ENCODE measurements at regions of chr19 and their contacts with region 1.

Region 1: DNA sequence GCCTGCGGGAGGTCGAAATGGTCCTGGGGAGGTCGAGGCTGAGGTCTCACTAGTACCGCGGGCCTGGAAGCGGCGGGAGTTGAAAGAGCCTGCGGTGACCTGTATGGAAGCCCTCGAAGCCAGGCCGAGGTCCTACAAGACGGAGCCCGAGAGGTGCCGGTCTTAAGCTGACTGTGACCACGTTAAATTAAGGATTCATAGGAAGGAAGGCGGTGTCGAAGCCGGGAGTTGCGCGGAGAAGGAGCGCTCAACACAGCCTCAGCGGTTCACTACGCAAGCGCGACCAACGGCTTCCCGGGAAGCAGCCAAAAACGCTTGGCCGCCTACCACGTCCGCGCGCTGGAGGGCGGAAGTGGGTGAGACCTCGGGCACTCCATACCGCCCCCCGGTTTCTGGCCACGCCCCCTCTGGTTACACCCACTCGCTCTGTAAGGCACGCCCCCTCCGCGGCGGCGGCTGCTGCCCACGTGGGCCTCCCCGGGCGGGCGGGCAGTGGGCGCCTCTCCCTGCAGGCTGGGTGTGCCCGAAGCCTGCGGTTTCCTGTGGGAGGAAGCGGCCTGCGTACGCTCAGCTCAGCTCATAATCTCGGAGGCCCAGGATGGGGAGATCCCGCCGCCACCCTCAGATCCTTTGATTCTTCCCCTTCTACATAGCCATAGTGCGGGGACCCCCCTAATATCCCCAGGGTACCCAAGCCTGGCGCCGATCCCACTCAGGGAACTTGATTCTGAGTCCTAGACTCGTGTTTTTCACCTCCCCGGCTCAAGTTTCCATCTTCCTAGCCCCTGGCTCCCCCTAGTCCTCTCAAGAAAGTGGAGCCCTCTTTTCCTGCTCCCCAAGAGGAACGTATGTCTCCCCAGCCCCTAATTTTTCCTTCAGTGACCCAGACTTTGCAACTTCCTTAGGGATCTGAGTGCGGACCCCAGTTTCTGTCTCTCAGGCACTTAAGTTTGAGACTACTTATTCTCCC is 3.4 kb upstream of the EMP3 start:
- DNase-seq: peak; percentile 99 to 100 (median 100)
- ATAC-seq: peak; percentile 68
- H3K4me3 ChIP-seq: peak overlapping the region; percentile 76 to 78
- H3K4me3 Mint-ChIP-seq: peak overlapping the region; percentile 94
- H3K27ac ChIP-seq: peak overlapping the region; percentile 87 to 99
- H3K27ac Mint-ChIP-seq: peak overlapping the region; percentile 100
- H3K4me1 ChIP-seq: peaks cover 54% of the 10 kb centered on the region
- H3K4me1 Mint-ChIP-seq: peaks cover 60% of the 10 kb centered on the region
- H3K27me3 ChIP-seq: no peaks in the 10 kb centered on the region
- H3K27me3 Mint-ChIP-seq: no peaks in the 10 kb centered on the region
- CTCF ChIP-seq: no peak

Region 2: GRCh38 chr19:48203732-48204628 is 117.9 kb before region 1 on chr19:
- CTCF ChIA-PET with region 1: no interaction called
- POLR2A ChIA-PET with region 1: interaction called, 8 read pairs
- intact Hi-C with region 1: loop called in 1 of 2 experiments (anchors 5 kb)
- DNase-seq: peak; percentile 78 to 95 (median 90)
- ATAC-seq: peak; percentile 100
- H3K4me3 ChIP-seq: peak overlapping the region; percentile 81 to 83
- H3K4me3 Mint-ChIP-seq: no peak overlapping the region
- H3K27ac ChIP-seq: peak overlapping the region; percentile 61 to 72
- H3K27ac Mint-ChIP-seq: no peak overlapping the region
- H3K4me1 ChIP-seq: peaks cover 16% of the 10 kb centered on the region
- H3K4me1 Mint-ChIP-seq: peaks cover 26% of the 10 kb centered on the region
- H3K27me3 ChIP-seq: no peaks in the 10 kb centered on the region
- H3K27me3 Mint-ChIP-seq: no peaks in the 10 kb centered on the region
- CTCF ChIP-seq: no peak

Region 3: DNA sequence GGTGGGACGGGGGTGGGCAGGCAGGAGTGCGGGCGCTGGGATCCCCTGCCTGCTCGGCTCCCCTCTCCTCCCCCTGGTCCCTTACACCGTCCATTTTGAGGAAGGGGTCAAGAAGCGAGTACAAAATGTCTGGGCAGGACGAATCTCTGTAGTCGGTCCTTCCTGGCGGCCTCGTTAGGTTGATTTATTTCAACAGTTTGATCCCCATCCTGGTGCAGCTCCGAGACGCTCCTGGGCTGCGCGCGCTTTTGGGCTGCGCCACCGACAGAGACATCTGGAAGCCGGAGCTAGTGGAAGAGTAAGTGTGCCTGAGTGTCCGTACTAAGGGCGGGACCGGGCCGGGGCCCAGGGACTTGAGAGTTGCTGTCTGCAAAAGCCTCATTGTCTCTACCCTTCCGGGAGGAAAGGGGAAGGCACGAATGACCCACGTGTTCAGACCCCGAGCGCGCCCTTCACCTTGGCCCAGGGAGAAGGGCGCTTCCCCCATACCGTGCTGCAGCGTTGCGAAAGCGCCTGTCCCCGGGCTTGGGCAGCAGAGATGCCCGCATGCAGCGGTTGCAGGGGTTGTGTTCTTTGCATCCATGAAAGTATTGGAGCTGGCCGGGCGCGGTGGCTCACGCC is 50.3 kb before region 1 on chr19:
- CTCF ChIA-PET with region 1: interaction called, 3 read pairs
- POLR2A ChIA-PET with region 1: no interaction called
- intact Hi-C with region 1: loop called (anchors 1 to 2 kb)
- DNase-seq: peak in 3 of 9 experiments; percentile 10 to 55 (median 30)
- ATAC-seq: peak; percentile 23
- H3K4me3 ChIP-seq: peak overlapping the region; percentile 41 to 43
- H3K4me3 Mint-ChIP-seq: peak overlapping the region; percentile 82
- H3K27ac ChIP-seq: no peak overlapping the region
- H3K27ac Mint-ChIP-seq: no peak overlapping the region
- H3K4me1 ChIP-seq: peaks cover 4% of the 10 kb centered on the region
- H3K4me1 Mint-ChIP-seq: peaks cover 13% of the 10 kb centered on the region
- H3K27me3 ChIP-seq: peaks cover 0 to 14% of the 10 kb centered on the region in 2 experiments
- H3K27me3 Mint-ChIP-seq: peaks cover 12% of the 10 kb centered on the region
- CTCF ChIP-seq: no peak

Region 4: GRCh38 chr19:48391107-48391986 is 69.4 kb after region 1 on chr19 and contains the start of gene KDELR1:
- CTCF ChIA-PET with region 1: interaction called, 3 read pairs
- POLR2A ChIA-PET with region 1: no interaction called
- intact Hi-C with region 1: loop called (anchors 2 kb)
- DNase-seq: peak; percentile 53 to 86 (median 76)
- ATAC-seq: peak; percentile 85
- H3K4me3 ChIP-seq: peak within 1 kb of the TSS; percentile 75 to 81
- H3K4me3 Mint-ChIP-seq: peak within 1 kb of the TSS; percentile 92
- H3K27ac ChIP-seq: peak within 1 kb of the TSS; percentile 87 to 92
- H3K27ac Mint-ChIP-seq: peak within 1 kb of the TSS; percentile 95
- H3K4me1 ChIP-seq: peaks cover 37% of the 10 kb centered on the region
- H3K4me1 Mint-ChIP-seq: peaks cover 39% of the 10 kb centered on the region
- H3K27me3 ChIP-seq: peaks cover 24 to 31% of the 10 kb centered on the region in 2 experiments
- H3K27me3 Mint-ChIP-seq: peaks cover 15% of the 10 kb centered on the region
- CTCF ChIP-seq: peak; percentile 96
- total RNA-seq, gene KDELR1: 29.7 to 33.1 TPM

Region 5: DNA sequence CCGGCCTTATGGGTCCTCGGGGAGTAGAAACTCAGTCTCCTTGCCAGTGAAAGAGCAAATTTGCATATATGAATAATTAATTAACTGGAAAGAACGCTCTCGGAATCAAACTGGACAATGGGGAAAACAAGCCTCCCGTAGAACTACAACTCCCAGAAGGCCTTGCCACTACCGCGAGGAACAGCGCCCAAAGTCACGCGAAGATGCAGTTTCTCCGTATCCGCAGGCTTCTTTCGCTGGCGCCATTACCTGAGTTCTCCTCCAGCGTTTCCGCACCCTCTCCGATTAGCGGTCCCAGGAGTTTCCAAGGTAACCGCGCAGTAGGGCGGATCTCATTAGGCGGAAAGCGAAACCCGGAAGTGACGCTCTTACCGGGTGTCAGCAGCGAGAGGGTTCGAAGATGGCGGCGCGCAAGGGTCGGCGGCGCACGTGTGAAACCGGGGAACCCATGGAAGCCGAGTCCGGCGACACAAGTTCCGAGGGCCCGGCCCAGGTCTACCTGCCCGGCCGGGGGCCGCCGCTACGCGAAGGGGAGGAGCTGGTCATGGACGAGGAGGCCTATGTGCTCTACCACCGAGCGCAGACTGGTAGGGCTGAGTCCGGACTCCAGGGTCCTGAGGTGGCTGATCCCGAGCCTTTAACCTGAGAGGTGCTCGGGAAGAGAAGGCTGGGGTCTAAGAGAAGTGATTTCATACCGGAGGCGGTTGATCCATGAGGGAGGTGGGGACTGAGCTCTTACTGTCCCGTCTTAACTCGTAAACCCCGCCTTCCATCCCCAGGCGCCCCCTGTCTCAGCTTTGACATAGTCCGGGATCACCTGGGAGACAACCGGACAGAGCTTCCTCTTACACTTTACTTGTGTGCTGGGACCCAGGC is 123.9 kb after region 1 on chr19 and contains the start of gene GRWD1:
- CTCF ChIA-PET with region 1: no interaction called
- POLR2A ChIA-PET with region 1: interaction called, 3 read pairs
- intact Hi-C with region 1: loop called in 1 of 2 experiments (anchors 1 kb)
- DNase-seq: peak; percentile 83 to 98 (median 91)
- ATAC-seq: peak; percentile 93
- H3K4me3 ChIP-seq: peak within 1 kb of the TSS; percentile 82 to 90
- H3K4me3 Mint-ChIP-seq: peak within 1 kb of the TSS; percentile 93
- H3K27ac ChIP-seq: peak within 1 kb of the TSS; percentile 79 to 89
- H3K27ac Mint-ChIP-seq: peak within 1 kb of the TSS; percentile 95
- H3K4me1 ChIP-seq: peaks cover 24% of the 10 kb centered on the region
- H3K4me1 Mint-ChIP-seq: peaks cover 40% of the 10 kb centered on the region
- H3K27me3 ChIP-seq: peaks cover 19 to 22% of the 10 kb centered on the region in 2 experiments
- H3K27me3 Mint-ChIP-seq: peaks cover 18% of the 10 kb centered on the region
- CTCF ChIP-seq: no peak
- total RNA-seq, gene GRWD1: 36.1 to 41.7 TPM

Region 6: DNA sequence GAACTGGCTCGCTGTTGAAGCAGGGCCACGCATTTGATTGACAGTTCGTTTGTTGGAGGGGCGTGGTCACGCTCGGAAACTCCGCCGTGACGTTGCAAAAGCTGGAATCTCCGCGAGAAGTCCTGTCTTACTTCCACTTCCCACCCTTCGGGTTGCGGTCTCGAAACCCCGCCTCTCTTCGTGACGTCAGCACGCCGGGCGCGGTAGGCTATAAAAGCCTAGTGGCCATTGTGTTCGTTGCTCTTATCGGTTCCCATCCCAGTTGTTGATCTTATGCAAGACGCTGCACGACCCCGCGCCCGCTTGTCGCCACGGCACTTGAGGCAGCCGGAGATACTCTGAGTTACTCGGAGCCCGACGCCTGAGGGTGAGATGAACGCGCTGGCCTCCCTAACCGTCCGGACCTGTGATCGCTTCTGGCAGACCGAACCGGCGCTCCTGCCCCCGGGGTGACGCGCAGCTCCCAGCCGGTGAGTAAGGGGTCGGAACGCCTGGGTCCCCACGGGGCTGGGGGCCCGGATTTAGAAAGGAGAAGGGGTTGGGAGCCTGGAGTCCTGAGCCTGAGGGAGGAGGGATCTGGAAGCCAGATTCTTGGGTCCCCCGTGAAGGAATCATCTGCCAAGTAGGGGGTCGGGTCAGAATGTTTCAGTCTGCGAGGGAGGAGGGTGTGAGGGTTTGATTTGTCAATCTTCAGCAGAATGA is 550.4 kb after region 1 on chr19 and contains the start of gene PPP1R15A:
- CTCF ChIA-PET with region 1: no interaction called
- POLR2A ChIA-PET with region 1: no interaction called
- intact Hi-C with region 1: loop called in 1 of 2 experiments (anchors 5 kb)
- DNase-seq: peak; percentile 95 to 99 (median 98)
- ATAC-seq: peak; percentile 41
- H3K4me3 ChIP-seq: peak within 1 kb of the TSS; percentile 88 to 90
- H3K4me3 Mint-ChIP-seq: peak within 1 kb of the TSS; percentile 97
- H3K27ac ChIP-seq: peak within 1 kb of the TSS; percentile 98 to 99
- H3K27ac Mint-ChIP-seq: peak within 1 kb of the TSS; percentile 100
- H3K4me1 ChIP-seq: peaks cover 32% of the 10 kb centered on the region
- H3K4me1 Mint-ChIP-seq: peaks cover 34% of the 10 kb centered on the region
- H3K27me3 ChIP-seq: no peaks in the 10 kb centered on the region
- H3K27me3 Mint-ChIP-seq: no peaks in the 10 kb centered on the region
- CTCF ChIP-seq: no peak
- total RNA-seq, gene PPP1R15A: 398 to 399 TPM

Measured in CD8-positive, alpha-beta T cell (primary cell).